Spleen (tissue), 13 donors: ENCODE measurements at regions of chr2 and their contacts with region 1.

Region 1: GRCh38 chr2:21317131-21317530 is 193.4 kb downstream of the TDRD15 start:
- DNase-seq: no peak
- H3K4me3 ChIP-seq: no peak overlapping the region
- H3K27ac ChIP-seq: no peak overlapping the region
- H3K4me1 ChIP-seq: peaks cover 0 to 6% (median 0%) of the 10 kb centered on the region in 6 donors
- H3K27me3 ChIP-seq: no peaks in the 10 kb centered on the region
- CTCF ChIP-seq: peak in 9 of 11 experiments; percentile 12 to 76 (median 59)
- POLR2A ChIP-seq: no peak

Region 2: GRCh38 chr2:21155365-21156136 is 161.6 kb before region 1 on chr2:
- intact Hi-C with region 1: no loop called
- DNase-seq: no peak
- H3K4me3 ChIP-seq: no peak overlapping the region
- H3K27ac ChIP-seq: no peak overlapping the region
- H3K4me1 ChIP-seq: no peaks in the 10 kb centered on the region
- H3K27me3 ChIP-seq: no peaks in the 10 kb centered on the region
- CTCF ChIP-seq: no peak
- POLR2A ChIP-seq: no peak

Region 3: GRCh38 chr2:21175895-21176646 is 141.1 kb before region 1 on chr2:
- intact Hi-C with region 1: loop called (anchors 5 kb)
- DNase-seq: no peak
- H3K4me3 ChIP-seq: no peak overlapping the region
- H3K27ac ChIP-seq: peak overlapping the region in 1 of 8 donors; percentile 34
- H3K4me1 ChIP-seq: no peaks in the 10 kb centered on the region
- H3K27me3 ChIP-seq: no peaks in the 10 kb centered on the region
- CTCF ChIP-seq: peak in 3 of 11 experiments; percentile 23 to 48 (median 40)
- POLR2A ChIP-seq: no peak

Region 4: DNA sequence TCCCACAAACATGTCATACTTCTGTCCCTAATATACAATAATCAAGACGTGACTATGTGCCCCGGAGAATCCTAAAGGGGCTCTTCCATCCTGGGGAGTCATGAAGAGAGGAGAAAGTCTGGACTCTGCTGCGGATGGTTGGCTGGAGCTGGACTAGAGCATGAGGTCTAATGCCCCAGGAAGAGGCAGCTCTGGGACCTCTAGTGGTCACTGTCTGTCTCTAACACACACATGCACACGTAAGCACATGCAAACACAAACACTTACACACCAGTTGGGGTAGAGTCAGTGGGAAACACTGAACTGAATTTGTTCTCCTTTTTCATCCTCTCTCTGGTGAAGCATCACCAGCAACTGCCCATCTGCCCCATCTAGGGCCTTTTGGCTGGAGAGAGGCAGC is 78.2 kb after region 1 on chr2:
- intact Hi-C with region 1: no loop called
- DNase-seq: no peak
- H3K4me3 ChIP-seq: no peak overlapping the region
- H3K27ac ChIP-seq: no peak overlapping the region
- H3K4me1 ChIP-seq: no peaks in the 10 kb centered on the region
- H3K27me3 ChIP-seq: no peaks in the 10 kb centered on the region
- CTCF ChIP-seq: peak in 1 of 11 experiments; percentile 19
- POLR2A ChIP-seq: no peak

Region 5: GRCh38 chr2:21836766-21837543 is 519.8 kb after region 1 on chr2:
- intact Hi-C with region 1: no loop called
- DNase-seq: no peak
- H3K4me3 ChIP-seq: no peak overlapping the region
- H3K27ac ChIP-seq: no peak overlapping the region
- H3K4me1 ChIP-seq: no peaks in the 10 kb centered on the region
- H3K27me3 ChIP-seq: no peaks in the 10 kb centered on the region
- CTCF ChIP-seq: no peak
- POLR2A ChIP-seq: no peak